Panc1 (cell line): ENCODE measurements at regions of chr22 and their contacts with region 1.

Region 1: GRCh38 chr22:41621099-41621910 is at the start of gene XRCC6:
- DNase-seq: peak; percentile 97
- ATAC-seq: peak; percentile 96
- H3K4me3 ChIP-seq: peak within 1 kb of the TSS; percentile 71 to 91
- H3K27ac ChIP-seq: peak within 1 kb of the TSS; percentile 93
- H3K4me1 ChIP-seq: peaks cover 7% of the 10 kb centered on the region; the same call in 1 of the 2 replicates
- H3K27me3 ChIP-seq: no peaks in the 10 kb centered on the region
- CTCF ChIP-seq: no peak
- total RNA-seq, gene XRCC6: 287 TPM

Region 2: DNA sequence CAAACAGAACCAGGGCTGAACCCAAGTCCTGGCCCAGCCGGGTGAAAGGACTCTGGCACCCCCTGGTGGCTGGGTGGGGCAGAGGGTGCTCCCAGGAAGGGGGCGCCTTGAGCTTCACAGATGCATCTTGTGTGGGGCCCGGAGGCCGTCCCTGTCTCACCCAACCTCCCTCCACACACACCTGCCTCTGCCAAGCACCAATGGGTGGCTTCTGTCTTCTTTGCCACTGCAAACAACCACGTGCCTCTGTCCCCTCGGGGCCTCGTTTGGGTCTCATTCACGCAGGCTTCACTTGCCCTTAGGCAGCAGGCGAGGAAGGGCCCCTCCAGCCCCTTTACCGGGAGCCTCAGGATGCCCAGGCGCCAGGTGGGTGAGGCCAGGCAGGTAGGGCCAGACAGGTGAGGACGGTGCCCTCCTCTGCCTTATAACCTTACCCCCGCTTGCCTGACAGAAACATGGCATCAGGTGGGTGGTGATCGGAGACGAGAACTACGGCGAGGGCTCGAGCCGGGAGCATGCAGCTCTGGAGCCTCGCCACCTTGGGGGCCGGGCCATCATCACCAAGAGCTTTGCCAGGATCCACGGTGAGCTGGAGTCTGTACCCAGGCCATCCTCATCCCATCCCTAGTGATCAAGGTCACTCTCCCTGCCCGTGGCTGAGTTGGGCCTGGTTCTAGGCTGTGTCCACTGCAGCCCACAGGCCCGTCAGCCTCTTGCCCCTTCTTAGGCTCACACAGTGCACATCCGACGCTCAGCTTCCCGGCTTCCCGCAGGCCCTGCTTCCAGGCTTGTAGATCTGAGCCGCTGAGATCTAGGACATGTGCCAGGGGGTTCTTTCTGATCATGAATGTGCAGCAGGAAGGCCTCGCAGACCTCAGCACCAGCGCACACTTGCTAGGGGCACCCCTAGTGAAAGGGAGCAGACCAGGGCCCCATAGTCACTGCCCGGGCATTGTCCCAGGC is 94.2 kb before region 1 on chr22:
- CTCF ChIA-PET with region 1: no interaction called
- POLR2A ChIA-PET with region 1: no interaction called
- in situ Hi-C with region 1: no loop called
- intact Hi-C with region 1: no loop called
- DNase-seq: no peak
- ATAC-seq: peak; percentile 43
- H3K4me3 ChIP-seq: no peak overlapping the region
- H3K27ac ChIP-seq: peak overlapping the region; percentile 54; the same call in 1 of the 2 replicates
- H3K4me1 ChIP-seq: peaks cover 34% of the 10 kb centered on the region
- H3K27me3 ChIP-seq: no peaks in the 10 kb centered on the region
- CTCF ChIP-seq: peak; percentile 92

Region 3: DNA sequence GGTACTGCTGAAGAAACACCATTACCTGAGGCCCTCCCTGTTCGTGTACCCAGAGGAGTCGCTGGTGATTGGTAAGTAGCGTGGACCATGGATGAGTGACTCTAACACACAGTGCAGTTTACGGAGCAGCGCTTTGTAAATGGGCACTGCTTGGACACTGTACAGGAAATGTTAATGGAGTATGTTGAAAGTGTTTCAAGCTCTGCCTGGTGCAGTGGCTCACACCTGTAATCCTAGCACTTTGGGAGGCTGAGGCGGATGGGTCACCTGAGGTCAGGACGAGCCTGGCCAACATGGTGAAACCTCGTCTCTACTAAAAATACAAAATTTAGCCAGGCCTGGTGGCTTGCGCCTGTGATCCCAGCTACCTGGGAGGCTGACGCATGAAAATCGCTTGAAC is 29.5 kb after region 1 on chr22:
- CTCF ChIA-PET with region 1: no interaction called
- POLR2A ChIA-PET with region 1: interaction called, 12 read pairs
- in situ Hi-C with region 1: no loop called
- intact Hi-C with region 1: no loop called
- DNase-seq: no peak
- ATAC-seq: no peak
- H3K4me3 ChIP-seq: no peak overlapping the region
- H3K27ac ChIP-seq: no peak overlapping the region
- H3K4me1 ChIP-seq: no peaks in the 10 kb centered on the region
- H3K27me3 ChIP-seq: no peaks in the 10 kb centered on the region
- CTCF ChIP-seq: no peak

Region 4: GRCh38 chr22:41688365-41689211 is 67.3 kb after region 1 on chr22 and contains the start of gene SNU13:
- CTCF ChIA-PET with region 1: no interaction called
- POLR2A ChIA-PET with region 1: no interaction called
- in situ Hi-C with region 1: no loop called
- intact Hi-C with region 1: no loop called
- DNase-seq: peak; percentile 30
- ATAC-seq: peak; percentile 98
- H3K4me3 ChIP-seq: peak within 1 kb of the TSS; percentile 88 to 89
- H3K27ac ChIP-seq: peak within 1 kb of the TSS; percentile 90
- H3K4me1 ChIP-seq: no peaks in the 10 kb centered on the region; the same call in 1 of the 2 replicates
- H3K27me3 ChIP-seq: no peaks in the 10 kb centered on the region
- CTCF ChIP-seq: no peak
- total RNA-seq, gene SNU13: 113 TPM